Mammary epithelial cell (primary cell): ENCODE measurements at regions of chr14 and their contacts with region 1.

Region 1: GRCh38 chr14:73741386-73741875 is 27.2 kb upstream of the PNMA1 start:
- DNase-seq: peak; percentile 72
- H3K4me3 ChIP-seq: peak overlapping the region in 1 of 3 experiments; percentile 14
- H3K27ac ChIP-seq: peak overlapping the region; percentile 70
- H3K4me1 ChIP-seq: peaks cover 75% of the 10 kb centered on the region
- H3K27me3 ChIP-seq: no peaks in the 10 kb centered on the region
- CTCF ChIP-seq: no peak

Region 2: GRCh38 chr14:73173092-73173735 is 568.2 kb before region 1 on chr14:
- CTCF ChIA-PET with region 1: no interaction called
- dilution Hi-C with region 1: no loop called
- in situ Hi-C with region 1: no loop called
- intact Hi-C with region 1: no loop called
- DNase-seq: peak; percentile 9
- H3K4me3 ChIP-seq: no peak overlapping the region
- H3K27ac ChIP-seq: no peak overlapping the region
- H3K4me1 ChIP-seq: no peaks in the 10 kb centered on the region
- H3K27me3 ChIP-seq: no peaks in the 10 kb centered on the region
- CTCF ChIP-seq: peak; percentile 38 to 52

Region 3: DNA sequence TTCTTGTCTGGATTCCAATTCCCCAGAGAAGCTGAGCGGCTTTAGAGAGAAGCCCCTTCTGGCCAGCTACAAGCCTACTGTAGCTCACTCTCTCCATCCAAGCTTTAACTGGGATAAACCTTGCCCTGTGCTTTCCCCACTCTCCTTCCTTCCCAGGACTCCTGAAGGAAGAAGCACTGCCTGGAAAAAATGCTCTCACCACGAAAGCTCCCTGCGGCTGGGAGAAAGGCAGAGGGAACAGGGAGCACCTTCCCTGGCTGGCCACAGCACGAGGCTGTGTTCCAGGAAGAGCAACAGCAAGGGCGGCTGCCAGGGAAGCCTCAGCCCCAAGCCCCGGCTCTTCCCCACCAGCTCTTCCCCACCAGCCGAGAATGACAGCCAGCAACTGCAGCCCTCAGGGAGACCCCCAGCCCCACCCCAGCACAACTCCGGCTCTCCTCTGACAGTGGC is 13.5 kb after region 1 on chr14:
- CTCF ChIA-PET with region 1: no interaction called
- dilution Hi-C with region 1: no loop called
- in situ Hi-C with region 1: no loop called
- intact Hi-C with region 1: loop called (anchors 1 kb)
- DNase-seq: no peak
- H3K4me3 ChIP-seq: peak overlapping the region in 1 of 3 experiments; percentile 14
- H3K27ac ChIP-seq: peak overlapping the region; percentile 91
- H3K4me1 ChIP-seq: peaks cover 76% of the 10 kb centered on the region
- H3K27me3 ChIP-seq: no peaks in the 10 kb centered on the region
- CTCF ChIP-seq: no peak

Region 4: DNA sequence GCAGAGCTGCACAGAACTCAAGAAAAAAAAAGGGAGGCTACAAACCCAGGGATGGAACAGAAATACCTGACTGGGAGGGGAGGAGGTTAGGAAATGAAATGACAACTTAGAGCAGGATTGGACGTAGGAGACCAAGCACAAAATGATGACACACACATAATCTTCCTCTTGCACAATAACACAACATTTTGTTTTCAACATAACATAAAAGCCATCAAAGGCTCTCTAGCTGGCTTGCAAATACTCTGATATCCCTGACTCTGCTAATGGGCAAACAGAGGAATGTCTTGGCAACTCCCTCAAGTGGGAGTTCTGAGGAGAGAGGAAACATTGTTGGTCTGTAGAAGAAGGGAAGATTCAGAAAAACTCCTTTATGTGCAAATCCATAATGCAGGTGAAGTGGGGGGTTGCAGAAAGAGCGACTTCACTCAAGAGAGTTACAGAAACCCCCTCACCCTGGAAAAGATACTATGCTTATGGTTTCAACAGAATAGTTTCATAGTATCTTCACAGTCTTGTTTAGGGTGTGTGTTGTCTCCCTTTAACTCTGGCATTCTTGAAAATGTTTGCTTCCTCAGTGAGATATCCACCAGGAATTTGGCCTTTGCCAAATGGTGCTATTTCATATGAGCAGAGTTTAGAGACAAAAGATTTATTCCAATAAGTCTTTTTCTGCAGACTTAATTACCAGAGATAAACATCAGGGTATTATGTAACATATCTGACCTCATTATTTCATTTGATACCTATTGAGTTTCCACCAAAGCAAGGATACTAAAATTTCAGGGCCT is 914.4 kb after region 1 on chr14:
- CTCF ChIA-PET with region 1: no interaction called
- dilution Hi-C with region 1: no loop called
- in situ Hi-C with region 1: no loop called
- intact Hi-C with region 1: no loop called
- DNase-seq: peak; percentile 76
- H3K4me3 ChIP-seq: no peak overlapping the region
- H3K27ac ChIP-seq: peak overlapping the region; percentile 59
- H3K4me1 ChIP-seq: peaks cover 75% of the 10 kb centered on the region
- H3K27me3 ChIP-seq: no peaks in the 10 kb centered on the region
- CTCF ChIP-seq: no peak